Activated naive CD8-positive, alpha-beta T cell treated with anti-CD3 and anti-CD28 coated beads, Interleukin-2, amount 10 ng/mL, durations not matched to agents 7 days and 5 days (primary cell): ENCODE measurements at regions of chr14 and their contacts with region 1.

Region 1: GRCh38 chr14:75906676-75907280 is 75.0 kb downstream of the TGFB3 start:
- DNase-seq: peak; percentile 42
- ATAC-seq: peak; percentile 33
- H3K4me3 Mint-ChIP-seq: no peak overlapping the region
- H3K27ac Mint-ChIP-seq: no peak overlapping the region
- H3K4me1 Mint-ChIP-seq: no peaks in the 10 kb centered on the region
- H3K27me3 Mint-ChIP-seq: no peaks in the 10 kb centered on the region

Region 2: GRCh38 chr14:75851574-75851866 is 55.3 kb before region 1 on chr14:
- POLR2A ChIA-PET with region 1: no interaction called
- DNase-seq: no peak
- ATAC-seq: no peak
- H3K4me3 Mint-ChIP-seq: no peak overlapping the region
- H3K27ac Mint-ChIP-seq: no peak overlapping the region
- H3K4me1 Mint-ChIP-seq: no peaks in the 10 kb centered on the region
- H3K27me3 Mint-ChIP-seq: no peaks in the 10 kb centered on the region

Region 3: DNA sequence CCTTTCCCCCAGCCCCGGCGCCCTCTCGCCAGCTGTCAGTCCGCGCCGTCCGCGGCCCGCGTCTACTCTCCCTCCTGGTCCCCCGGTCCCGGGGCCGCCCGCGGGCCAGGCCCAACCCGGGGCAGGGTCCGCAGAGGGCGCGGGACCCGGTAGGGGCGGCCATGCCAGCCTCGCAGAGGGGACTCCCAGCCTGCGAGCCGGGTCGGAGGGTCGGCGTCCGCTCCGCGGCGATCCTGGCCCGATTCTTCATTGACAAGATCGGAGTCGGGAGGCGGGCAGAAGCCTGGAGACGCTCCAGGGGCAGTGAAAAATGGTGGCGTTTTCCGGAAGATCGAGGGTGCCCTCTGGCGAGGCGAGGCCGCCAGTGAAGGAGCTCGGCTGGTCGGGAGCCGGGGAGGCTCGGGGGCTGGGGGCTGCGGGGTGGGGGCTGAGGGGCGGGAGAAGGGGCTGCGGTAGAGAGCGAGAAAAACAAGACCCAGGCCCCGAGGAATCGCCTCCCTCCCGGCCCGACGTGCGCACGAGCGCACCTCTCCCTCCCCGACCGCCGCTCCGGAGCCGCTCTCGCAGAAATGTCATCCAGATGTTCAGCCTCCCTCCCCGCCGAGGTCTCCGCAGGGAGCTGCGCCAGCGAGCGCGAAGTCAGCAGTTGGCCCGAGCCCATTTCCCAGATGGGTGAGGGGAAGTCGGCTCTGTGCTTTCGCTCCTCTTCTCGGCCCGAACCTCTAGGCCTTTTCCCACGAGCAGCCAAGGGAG is 75.7 kb after region 1 on chr14:
- POLR2A ChIA-PET with region 1: interaction called, 10 read pairs
- DNase-seq: peak; percentile 85
- ATAC-seq: peak; percentile 64
- H3K4me3 Mint-ChIP-seq: peak overlapping the region; percentile 89
- H3K27ac Mint-ChIP-seq: no peak overlapping the region
- H3K4me1 Mint-ChIP-seq: peaks cover 35% of the 10 kb centered on the region
- H3K27me3 Mint-ChIP-seq: peaks cover 4% of the 10 kb centered on the region